HepG2 (cell line): ENCODE measurements at regions of chr3 and their contacts with region 1.

Region 1: GRCh38 chr3:18189282-18190050 is 235.7 kb downstream of the SATB1 start:
- DNase-seq: no peak
- ATAC-seq: no peak
- H3K4me3 ChIP-seq: no peak overlapping the region
- H3K27ac ChIP-seq: no peak overlapping the region
- H3K4me1 ChIP-seq: no peaks in the 10 kb centered on the region
- H3K27me3 ChIP-seq: no peaks in the 10 kb centered on the region
- CTCF ChIP-seq: no peak
- EP300 ChIP-seq: no peak
- POLR2A ChIP-seq: no peak
- RAD21 ChIP-seq: no peak

Region 2: DNA sequence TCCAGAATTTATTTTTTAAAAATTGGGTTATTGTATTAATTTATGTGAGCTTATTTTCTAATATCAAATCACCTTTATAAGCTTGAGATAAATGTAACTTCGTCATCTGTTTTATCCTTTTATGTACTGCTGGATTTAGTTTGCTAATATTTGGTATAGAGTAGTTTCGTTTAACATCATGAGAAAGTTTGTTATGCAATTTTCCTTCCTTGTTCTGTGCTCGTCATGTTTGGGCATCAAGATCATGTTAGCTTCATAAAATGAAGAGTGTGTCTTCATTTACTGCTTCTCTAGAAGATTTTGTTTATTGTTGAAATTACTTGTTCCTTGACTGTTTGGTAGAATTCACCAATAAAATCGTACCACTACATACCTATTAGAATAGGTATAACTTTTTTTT is 497.8 kb after region 1 on chr3:
- CTCF ChIA-PET with region 1: no interaction called
- POLR2A ChIA-PET with region 1: no interaction called
- in situ Hi-C with region 1: no loop called
- intact Hi-C with region 1: no loop called
- DNase-seq: no peak
- ATAC-seq: no peak
- H3K4me3 ChIP-seq: no peak overlapping the region
- H3K27ac ChIP-seq: no peak overlapping the region
- H3K4me1 ChIP-seq: no peaks in the 10 kb centered on the region
- H3K27me3 ChIP-seq: no peaks in the 10 kb centered on the region
- CTCF ChIP-seq: no peak
- EP300 ChIP-seq: no peak
- POLR2A ChIP-seq: no peak
- RAD21 ChIP-seq: no peak

Region 3: GRCh38 chr3:18847583-18848197 is 658.2 kb after region 1 on chr3:
- CTCF ChIA-PET with region 1: no interaction called
- POLR2A ChIA-PET with region 1: no interaction called
- in situ Hi-C with region 1: no loop called
- intact Hi-C with region 1: no loop called
- DNase-seq: peak; percentile 10
- ATAC-seq: peak; percentile 56; the same call in 2 of the 3 replicates
- H3K4me3 ChIP-seq: no peak overlapping the region
- H3K27ac ChIP-seq: no peak overlapping the region
- H3K4me1 ChIP-seq: no peaks in the 10 kb centered on the region
- H3K27me3 ChIP-seq: no peaks in the 10 kb centered on the region
- CTCF ChIP-seq: peak; percentile 25; the same call in 1 of the 2 replicates
- EP300 ChIP-seq: no peak
- POLR2A ChIP-seq: no peak
- RAD21 ChIP-seq: no peak

Region 4: GRCh38 chr3:19931180-19931692 is 1741.8 kb after region 1 on chr3:
- CTCF ChIA-PET with region 1: no interaction called
- POLR2A ChIA-PET with region 1: no interaction called
- in situ Hi-C with region 1: no loop called
- intact Hi-C with region 1: loop called (anchors 10 kb)
- DNase-seq: no peak
- ATAC-seq: no peak
- H3K4me3 ChIP-seq: no peak overlapping the region
- H3K27ac ChIP-seq: no peak overlapping the region
- H3K4me1 ChIP-seq: peaks cover 13% of the 10 kb centered on the region; the same call in 1 of the 2 replicates
- H3K27me3 ChIP-seq: no peaks in the 10 kb centered on the region; a peak in 1 of 5 replicates
- CTCF ChIP-seq: no peak
- EP300 ChIP-seq: no peak
- POLR2A ChIP-seq: no peak
- RAD21 ChIP-seq: no peak